ENCODE measurements at regions of chr1 and their contacts with region 1.

Region 1: GRCh38 chr1:201348211-201348566 is 29.3 kb downstream of the TNNT2 start:
- DNase-seq: peak; percentile 34 to 86
- H3K4me3 ChIP-seq: peak overlapping the region in 1 of 4 experiments; percentile 37; a peak in 2 of 8 replicates
- H3K27ac ChIP-seq: no peak overlapping the region
- H3K4me1 ChIP-seq: peaks cover 8 to 25% (median 12%) of the 10 kb centered on the region in 4 experiments
- H3K27me3 ChIP-seq: 0 out of 7 replicates have a peak, but pooled peaks cover 0 to 3% (median 0%) of the 10 kb centered on the region in 4 experiments
- CTCF ChIP-seq: peak; percentile 82 to 86 (median 85)
- EP300 ChIP-seq: no peak
- POLR2A ChIP-seq: no peak
- RAD21 ChIP-seq: peak; percentile 77 to 82

Region 2: GRCh38 chr1:201275041-201275676 is 73.0 kb before region 1 on chr1:
- CTCF ChIA-PET with region 1: interaction called, 21 read pairs
- POLR2A ChIA-PET with region 1: interaction called, 4 read pairs
- DNase-seq: no peak
- H3K4me3 ChIP-seq: no peak overlapping the region
- H3K27ac ChIP-seq: no peak overlapping the region
- H3K4me1 ChIP-seq: peaks cover 0 to 4% (median 0%) of the 10 kb centered on the region in 4 experiments; a peak in 2 of 7 replicates
- H3K27me3 ChIP-seq: peaks cover 0 to 3% (median 0%) of the 10 kb centered on the region in 4 experiments; a peak in 1 of 7 replicates
- CTCF ChIP-seq: no peak
- EP300 ChIP-seq: no peak
- POLR2A ChIP-seq: no peak
- RAD21 ChIP-seq: no peak

Region 3: GRCh38 chr1:201299968-201300367 is 48.2 kb before region 1 on chr1:
- CTCF ChIA-PET with region 1: interaction called, 42 read pairs
- POLR2A ChIA-PET with region 1: no interaction called
- DNase-seq: no peak
- H3K4me3 ChIP-seq: no peak overlapping the region
- H3K27ac ChIP-seq: no peak overlapping the region
- H3K4me1 ChIP-seq: peaks cover 0 to 5% (median 2%) of the 10 kb centered on the region in 4 experiments; a peak in 3 of 7 replicates
- H3K27me3 ChIP-seq: no peaks in the 10 kb centered on the region; a peak in 1 of 7 replicates
- CTCF ChIP-seq: no peak
- EP300 ChIP-seq: no peak
- POLR2A ChIP-seq: no peak
- RAD21 ChIP-seq: no peak

Region 4: DNA sequence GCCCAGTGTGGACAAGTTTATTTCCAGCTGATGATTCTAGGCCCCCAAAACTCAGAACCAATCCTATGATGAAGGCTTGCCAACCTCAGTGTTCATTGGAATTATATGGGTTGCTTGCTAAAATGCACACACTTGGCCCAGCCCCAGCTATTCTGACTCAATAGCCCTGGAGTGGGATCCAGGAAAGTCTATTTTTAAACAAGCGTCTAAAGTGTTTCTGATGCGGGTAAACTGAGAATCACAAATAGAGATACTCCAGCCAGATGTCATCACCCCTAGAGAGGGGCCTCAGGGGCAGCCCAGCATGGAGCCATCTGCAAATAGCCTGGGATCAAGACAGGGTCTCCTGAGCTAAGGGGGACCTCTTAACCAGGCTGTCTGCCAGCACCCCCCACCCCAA is 18.9 kb before region 1 on chr1:
- CTCF ChIA-PET with region 1: interaction called, 47 read pairs
- POLR2A ChIA-PET with region 1: interaction called, 4 read pairs
- DNase-seq: no peak
- H3K4me3 ChIP-seq: no peak overlapping the region
- H3K27ac ChIP-seq: no peak overlapping the region
- H3K4me1 ChIP-seq: no peaks in the 10 kb centered on the region; a peak in 1 of 7 replicates
- H3K27me3 ChIP-seq: no peaks in the 10 kb centered on the region
- CTCF ChIP-seq: no peak
- EP300 ChIP-seq: no peak
- POLR2A ChIP-seq: no peak
- RAD21 ChIP-seq: no peak

Region 5: DNA sequence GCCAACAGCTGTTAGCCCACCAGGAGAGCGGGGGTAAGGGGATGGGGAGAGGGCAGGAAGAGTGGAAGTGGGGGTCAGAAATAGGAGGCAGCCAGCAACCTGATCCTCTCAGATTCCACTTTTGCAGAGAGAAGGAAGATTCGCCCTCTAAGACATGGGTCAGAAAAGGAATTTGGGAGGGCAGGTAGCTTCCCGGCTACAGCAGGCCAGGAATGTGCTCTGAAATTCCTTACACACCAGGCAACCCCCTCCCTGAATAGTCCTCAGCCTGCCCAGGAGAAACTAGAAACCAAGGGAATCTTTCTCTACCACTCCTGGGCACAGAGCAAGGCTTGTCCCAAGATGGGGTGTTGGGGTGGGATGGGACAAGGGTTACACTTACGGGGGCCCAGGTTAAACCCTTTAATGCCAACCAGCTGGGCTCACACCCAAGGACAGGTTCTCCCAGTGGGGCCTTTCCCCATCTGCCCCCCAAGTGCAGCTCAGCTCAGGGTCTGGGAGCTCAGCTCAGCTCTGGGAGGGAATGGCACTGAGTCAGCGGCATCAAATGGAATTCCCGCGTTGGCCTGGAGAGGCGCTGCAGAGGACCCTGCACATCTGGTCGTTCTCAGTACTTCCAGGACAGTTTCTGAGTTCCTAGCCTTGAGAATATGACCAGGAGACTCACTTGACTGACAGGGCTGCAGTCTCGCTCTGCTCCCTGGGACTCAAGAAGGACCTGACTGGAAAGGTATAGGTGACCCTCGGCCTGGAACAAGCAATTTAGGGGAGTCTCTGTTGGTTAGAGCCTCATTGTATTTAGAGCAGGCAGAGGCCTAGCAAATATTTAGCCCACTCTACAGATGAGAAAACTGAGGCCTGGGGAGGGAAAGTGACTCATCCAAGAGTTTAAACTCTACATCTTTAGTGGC is 28.5 kb after region 1 on chr1:
- CTCF ChIA-PET with region 1: interaction called, 62 read pairs
- POLR2A ChIA-PET with region 1: interaction called, 3 read pairs
- DNase-seq: peak; percentile 86 to 93
- H3K4me3 ChIP-seq: peak overlapping the region in 3 of 4 experiments; percentile 30 to 51 (median 46); a peak in 5 of 8 replicates
- H3K27ac ChIP-seq: peak overlapping the region; percentile 95
- H3K4me1 ChIP-seq: peaks cover 9 to 40% (median 29%) of the 10 kb centered on the region in 4 experiments
- H3K27me3 ChIP-seq: no peaks in the 10 kb centered on the region
- CTCF ChIP-seq: peak; percentile 67 to 96 (median 94)
- EP300 ChIP-seq: peak in 1 of 2 experiments; percentile 76; a peak in 1 of 3 replicates
- POLR2A ChIP-seq: peak; percentile 76 to 77
- RAD21 ChIP-seq: peak; percentile 37 to 55; a peak in 3 of 4 replicates

Region 6: DNA sequence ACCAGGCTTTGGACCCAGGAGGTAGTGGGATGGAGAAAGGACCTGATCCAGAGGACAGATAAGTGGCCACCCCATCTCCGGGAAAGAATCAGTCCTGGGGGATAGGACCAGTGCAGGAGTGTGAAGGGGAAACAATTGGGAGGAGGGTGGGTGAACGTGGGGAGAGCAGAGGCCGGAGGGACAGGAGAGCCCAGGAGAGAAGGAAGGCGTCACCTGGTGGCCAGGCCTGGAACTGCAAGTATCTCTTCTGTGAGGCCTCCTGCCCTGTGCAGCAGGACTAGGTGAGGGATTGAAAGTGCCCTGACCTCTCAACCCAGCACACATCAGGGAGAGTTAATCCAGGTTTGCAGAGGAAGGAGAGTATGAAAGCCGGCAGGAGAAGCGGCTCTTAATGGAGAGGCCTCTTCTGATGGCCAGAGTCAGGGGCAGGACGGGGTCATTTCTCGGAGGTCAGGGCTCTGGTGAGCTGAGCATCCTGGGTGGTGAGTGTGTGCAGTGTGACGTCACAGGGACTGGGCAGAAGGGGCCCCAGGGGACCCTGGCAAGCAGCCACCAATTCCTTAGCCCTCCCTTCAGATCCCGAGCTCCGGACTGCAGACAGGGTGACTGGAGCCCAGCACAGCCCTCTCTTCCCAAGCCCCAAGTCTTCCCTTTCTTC is 60.1 kb after region 1 on chr1:
- CTCF ChIA-PET with region 1: interaction called, 50 read pairs
- POLR2A ChIA-PET with region 1: no interaction called
- DNase-seq: peak; percentile 80 to 98
- H3K4me3 ChIP-seq: no peak overlapping the region
- H3K27ac ChIP-seq: no peak overlapping the region
- H3K4me1 ChIP-seq: peaks cover 0 to 5% (median 0%) of the 10 kb centered on the region in 4 experiments; a peak in 2 of 7 replicates
- H3K27me3 ChIP-seq: no peaks in the 10 kb centered on the region; a peak in 1 of 7 replicates
- CTCF ChIP-seq: peak; percentile 91 to 99 (median 99)
- EP300 ChIP-seq: no peak
- POLR2A ChIP-seq: no peak
- RAD21 ChIP-seq: peak; percentile 81 to 82

Region 7: DNA sequence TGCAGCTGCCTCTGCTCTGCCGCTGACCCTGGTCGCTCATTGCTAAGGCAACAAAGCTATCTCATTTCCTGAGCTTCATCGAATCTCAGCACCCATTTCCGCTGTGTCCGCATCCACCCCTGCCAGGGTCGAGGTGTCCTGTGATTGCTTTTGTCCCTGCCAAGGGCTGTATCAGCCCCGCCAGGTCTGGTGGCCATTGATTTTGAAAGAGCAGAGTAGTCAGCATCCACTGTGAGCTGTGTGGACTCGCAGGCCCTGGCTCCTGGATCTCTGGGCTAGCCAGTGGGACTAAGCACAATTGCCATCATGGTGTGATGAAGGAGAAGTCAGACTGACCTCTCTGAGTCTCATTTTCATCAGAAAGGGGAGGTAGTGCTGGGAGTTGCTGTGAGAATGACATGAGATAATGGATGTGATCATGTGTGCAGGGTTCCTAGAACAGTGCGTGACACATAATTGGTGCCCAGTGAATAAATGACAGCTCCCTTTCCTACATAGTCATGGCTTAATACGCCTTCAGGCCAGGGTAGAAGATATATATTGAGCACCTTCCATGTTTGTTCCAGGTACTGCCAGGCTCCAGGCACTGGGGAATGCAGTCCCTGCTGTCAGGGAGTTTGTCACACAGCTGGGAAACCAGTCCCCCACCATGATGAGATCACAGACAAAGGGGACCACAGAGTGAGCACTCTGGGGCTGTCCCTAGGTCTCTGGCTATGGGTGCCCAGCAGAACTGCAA is 222.9 kb after region 1 on chr1:
- CTCF ChIA-PET with region 1: no interaction called
- POLR2A ChIA-PET with region 1: no interaction called
- DNase-seq: no peak
- H3K4me3 ChIP-seq: no peak overlapping the region
- H3K27ac ChIP-seq: no peak overlapping the region
- H3K4me1 ChIP-seq: no peaks in the 10 kb centered on the region; a peak in 1 of 7 replicates
- H3K27me3 ChIP-seq: no peaks in the 10 kb centered on the region
- CTCF ChIP-seq: no peak
- EP300 ChIP-seq: no peak
- POLR2A ChIP-seq: no peak
- RAD21 ChIP-seq: no peak